Natural killer cell (primary cell): ENCODE measurements at regions of chr5 and their contacts with region 1.

Region 1: DNA sequence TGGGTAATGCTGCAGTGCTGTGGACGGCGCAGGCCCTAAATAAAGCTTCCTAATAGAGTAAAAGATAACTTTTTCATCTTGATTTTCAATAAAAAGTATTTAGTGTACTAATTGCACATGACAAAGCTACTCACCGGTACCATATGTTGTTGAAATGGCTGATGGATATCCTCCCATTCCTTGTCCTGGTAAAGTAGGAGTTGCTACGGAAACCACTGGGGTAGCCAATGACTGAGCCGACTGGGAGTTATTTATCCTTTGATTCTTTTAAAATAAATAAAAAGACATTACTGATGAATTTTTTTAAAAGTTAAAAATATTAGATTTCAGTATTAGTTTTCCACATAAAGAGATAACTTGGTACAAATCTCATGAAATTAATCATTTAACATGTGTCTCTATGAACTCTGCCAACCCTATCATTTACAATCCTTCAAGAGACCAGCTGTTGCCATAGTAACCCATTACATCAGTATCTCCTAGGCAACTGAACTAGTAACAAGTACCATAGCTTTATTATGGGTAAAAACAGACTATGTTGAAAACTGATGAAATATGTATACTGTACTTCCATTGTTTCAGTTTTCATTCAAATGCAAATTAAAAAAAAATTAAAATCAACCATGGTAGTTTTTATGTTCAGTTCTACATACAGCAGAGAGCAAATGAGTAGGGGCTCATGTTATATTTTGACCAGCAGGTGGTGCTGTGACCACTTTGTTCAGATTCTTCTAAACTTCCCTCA is 153.7 kb downstream of the MEF2C start:
- DNase-seq: peak; percentile 40 to 80
- ATAC-seq: peak; percentile 70 to 80 (median 76)
- H3K4me3 ChIP-seq: no peak overlapping the region
- H3K4me3 Mint-ChIP-seq: no peak overlapping the region
- H3K27ac ChIP-seq: peak overlapping the region; percentile 42
- H3K27ac Mint-ChIP-seq: peak overlapping the region in 1 of 2 donors; percentile 29
- H3K4me1 ChIP-seq: peaks cover 5% of the 10 kb centered on the region
- H3K4me1 Mint-ChIP-seq: peaks cover 15 to 20% of the 10 kb centered on the region in 2 donors
- H3K27me3 ChIP-seq: no peaks in the 10 kb centered on the region
- H3K27me3 Mint-ChIP-seq: no peaks in the 10 kb centered on the region
- CTCF ChIP-seq: peak; percentile 83

Region 2: DNA sequence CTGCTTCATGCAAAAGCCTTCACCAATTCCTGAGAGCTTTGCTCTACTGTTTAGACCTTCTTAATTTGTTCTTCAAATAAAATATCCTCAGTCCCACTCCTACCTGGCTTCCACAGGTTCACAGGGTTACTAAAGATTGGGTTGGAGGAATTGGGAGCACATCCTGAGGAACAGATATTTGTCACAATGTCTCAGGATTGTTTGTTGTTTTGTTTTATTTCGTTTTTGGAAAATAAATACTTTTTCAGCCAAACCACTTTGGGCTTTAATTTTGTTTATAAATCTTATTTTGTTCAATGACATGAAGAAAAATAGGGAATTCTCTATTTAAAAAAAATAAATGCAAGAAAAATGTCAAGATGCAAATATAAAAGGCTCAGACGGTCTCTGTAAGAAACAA is 95.2 kb before region 1 on chr5:
- intact Hi-C with region 1: no loop called
- DNase-seq: no peak
- ATAC-seq: no peak
- H3K4me3 ChIP-seq: no peak overlapping the region
- H3K4me3 Mint-ChIP-seq: no peak overlapping the region
- H3K27ac ChIP-seq: no peak overlapping the region
- H3K27ac Mint-ChIP-seq: no peak overlapping the region
- H3K4me1 ChIP-seq: no peaks in the 10 kb centered on the region
- H3K4me1 Mint-ChIP-seq: no peaks in the 10 kb centered on the region
- H3K27me3 ChIP-seq: no peaks in the 10 kb centered on the region
- H3K27me3 Mint-ChIP-seq: peaks cover 11 to 31% of the 10 kb centered on the region in 2 donors
- CTCF ChIP-seq: no peak

Region 3: GRCh38 chr5:88826646-88827585 is 97.7 kb after region 1 on chr5:
- intact Hi-C with region 1: loop called (anchors 5 kb)
- DNase-seq: peak in 1 of 2 donors; percentile 23
- ATAC-seq: peak; percentile 57 to 66 (median 58)
- H3K4me3 ChIP-seq: no peak overlapping the region
- H3K4me3 Mint-ChIP-seq: no peak overlapping the region
- H3K27ac ChIP-seq: peak overlapping the region; percentile 70
- H3K27ac Mint-ChIP-seq: peak overlapping the region; percentile 53 to 81
- H3K4me1 ChIP-seq: peaks cover 8% of the 10 kb centered on the region
- H3K4me1 Mint-ChIP-seq: peaks cover 34 to 54% of the 10 kb centered on the region in 2 donors
- H3K27me3 ChIP-seq: no peaks in the 10 kb centered on the region
- H3K27me3 Mint-ChIP-seq: peaks cover 0 to 7% of the 10 kb centered on the region in 2 donors
- CTCF ChIP-seq: no peak

Region 4: GRCh38 chr5:88883059-88883835 is 154.0 kb after region 1 on chr5 and contains the start of gene MEF2C:
- intact Hi-C with region 1: loop called (anchors 5 kb)
- DNase-seq: peak in 1 of 2 donors; percentile 17
- ATAC-seq: peak; percentile 62 to 74 (median 69)
- H3K4me3 ChIP-seq: peak within 1 kb of the TSS; percentile 56
- H3K4me3 Mint-ChIP-seq: peak within 1 kb of the TSS; percentile 98
- H3K27ac ChIP-seq: peak within 1 kb of the TSS; percentile 52
- H3K27ac Mint-ChIP-seq: peak within 1 kb of the TSS; percentile 52 to 94
- H3K4me1 ChIP-seq: peaks cover 5% of the 10 kb centered on the region
- H3K4me1 Mint-ChIP-seq: peaks cover 22 to 27% of the 10 kb centered on the region in 2 donors
- H3K27me3 ChIP-seq: no peaks in the 10 kb centered on the region
- H3K27me3 Mint-ChIP-seq: peaks cover 0 to 2% of the 10 kb centered on the region in 2 donors
- CTCF ChIP-seq: no peak
- total RNA-seq, gene MEF2C: 9.2 to 22.0 (median 18.3) TPM

Region 5: GRCh38 chr5:90161414-90161813 is 1432.2 kb after region 1 on chr5:
- intact Hi-C with region 1: loop called (anchors 10 kb)
- DNase-seq: no peak
- ATAC-seq: no peak
- H3K4me3 ChIP-seq: no peak overlapping the region
- H3K4me3 Mint-ChIP-seq: no peak overlapping the region
- H3K27ac ChIP-seq: no peak overlapping the region
- H3K27ac Mint-ChIP-seq: no peak overlapping the region
- H3K4me1 ChIP-seq: no peaks in the 10 kb centered on the region
- H3K4me1 Mint-ChIP-seq: no peaks in the 10 kb centered on the region
- H3K27me3 ChIP-seq: no peaks in the 10 kb centered on the region
- H3K27me3 Mint-ChIP-seq: peaks cover 0 to 5% of the 10 kb centered on the region in 2 donors
- CTCF ChIP-seq: no peak

Region 6: GRCh38 chr5:90264689-90265544 is 1535.7 kb after region 1 on chr5:
- intact Hi-C with region 1: loop called (anchors 1 kb)
- DNase-seq: peak; percentile 34 to 67
- ATAC-seq: peak; percentile 46 to 76 (median 66)
- H3K4me3 ChIP-seq: no peak overlapping the region
- H3K4me3 Mint-ChIP-seq: no peak overlapping the region
- H3K27ac ChIP-seq: no peak overlapping the region
- H3K27ac Mint-ChIP-seq: no peak overlapping the region
- H3K4me1 ChIP-seq: peaks cover 3% of the 10 kb centered on the region
- H3K4me1 Mint-ChIP-seq: no peaks in the 10 kb centered on the region
- H3K27me3 ChIP-seq: no peaks in the 10 kb centered on the region
- H3K27me3 Mint-ChIP-seq: peaks cover 0 to 11% of the 10 kb centered on the region in 2 donors
- CTCF ChIP-seq: peak; percentile 95

Region 7: GRCh38 chr5:90386099-90386710 is 1656.9 kb after region 1 on chr5:
- intact Hi-C with region 1: loop called (anchors 2 kb)
- DNase-seq: peak in 1 of 2 donors; percentile 18
- ATAC-seq: no peak
- H3K4me3 ChIP-seq: no peak overlapping the region
- H3K4me3 Mint-ChIP-seq: no peak overlapping the region
- H3K27ac ChIP-seq: no peak overlapping the region
- H3K27ac Mint-ChIP-seq: no peak overlapping the region
- H3K4me1 ChIP-seq: no peaks in the 10 kb centered on the region
- H3K4me1 Mint-ChIP-seq: no peaks in the 10 kb centered on the region
- H3K27me3 ChIP-seq: no peaks in the 10 kb centered on the region
- H3K27me3 Mint-ChIP-seq: peaks cover 0 to 11% of the 10 kb centered on the region in 2 donors
- CTCF ChIP-seq: peak; percentile 55